Naive thymus-derived CD4-positive, alpha-beta T cell (primary cell): ENCODE measurements at regions of chr2 and their contacts with region 1.

Region 1: GRCh38 chr2:30336978-30337841 is 105.9 kb downstream of the LBH start:
- DNase-seq: peak; percentile 11 to 74 (median 69)
- ATAC-seq: peak; percentile 89
- H3K4me3 ChIP-seq: peak overlapping the region; percentile 46
- H3K4me3 Mint-ChIP-seq: peak overlapping the region; percentile 69 to 92 (median 85)
- H3K27ac ChIP-seq: peak overlapping the region; percentile 71
- H3K27ac Mint-ChIP-seq: peak overlapping the region; percentile 95 to 100 (median 98)
- H3K4me1 ChIP-seq: peaks cover 60 to 71% of the 10 kb centered on the region in 2 donors
- H3K4me1 Mint-ChIP-seq: peaks cover 57 to 87% (median 84%) of the 10 kb centered on the region in 7 donors
- H3K27me3 ChIP-seq: no peaks in the 10 kb centered on the region
- H3K27me3 Mint-ChIP-seq: no peaks in the 10 kb centered on the region

Region 2: DNA sequence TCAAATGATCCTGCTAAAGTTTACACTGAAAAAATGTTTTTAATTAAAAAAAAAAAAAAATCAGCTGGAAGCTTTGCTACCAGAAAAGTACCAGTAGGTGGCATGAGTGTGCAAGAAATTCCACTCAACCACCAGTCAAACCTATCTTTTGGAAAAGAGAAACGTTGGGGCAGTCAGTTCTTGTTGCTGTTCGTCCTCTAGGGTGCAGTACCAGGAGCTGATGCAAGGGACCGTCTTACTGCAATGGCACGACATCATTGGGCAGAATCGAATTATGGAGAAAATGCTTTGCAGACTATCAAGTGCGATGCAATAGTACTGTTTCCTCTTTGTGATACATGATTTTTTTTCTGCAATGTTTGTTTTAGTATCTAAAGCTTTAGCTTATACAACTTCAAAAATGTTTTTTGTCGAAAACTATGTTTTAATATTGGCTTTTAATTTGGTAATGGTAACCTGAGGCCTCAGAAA is 172.1 kb before region 1 on chr2:
- CTCF ChIA-PET with region 1: interaction called, 11 read pairs
- POLR2A ChIA-PET with region 1: interaction called, 8 read pairs
- intact Hi-C with region 1: loop called (anchors 1 to 5 kb)
- DNase-seq: peak in 8 of 9 donors; percentile 41 to 89 (median 84)
- ATAC-seq: peak; percentile 75
- H3K4me3 ChIP-seq: no peak overlapping the region
- H3K4me3 Mint-ChIP-seq: peak overlapping the region in 1 of 10 donors; percentile 37
- H3K27ac ChIP-seq: no peak overlapping the region
- H3K27ac Mint-ChIP-seq: peak overlapping the region in 4 of 9 donors; percentile 19 to 76 (median 50)
- H3K4me1 ChIP-seq: peaks cover 0 to 5% of the 10 kb centered on the region in 2 donors
- H3K4me1 Mint-ChIP-seq: peaks cover 3 to 12% (median 6%) of the 10 kb centered on the region in 7 donors
- H3K27me3 ChIP-seq: no peaks in the 10 kb centered on the region
- H3K27me3 Mint-ChIP-seq: no peaks in the 10 kb centered on the region

Region 3: GRCh38 chr2:30239308-30239985 is 97.8 kb before region 1 on chr2:
- CTCF ChIA-PET with region 1: interaction called, 32 read pairs
- POLR2A ChIA-PET with region 1: interaction called, 192 read pairs
- intact Hi-C with region 1: loop called in 1 of 2 experiments (anchors 1 kb)
- DNase-seq: peak; percentile 55 to 79 (median 74)
- ATAC-seq: peak; percentile 88
- H3K4me3 ChIP-seq: peak overlapping the region; percentile 45
- H3K4me3 Mint-ChIP-seq: peak overlapping the region; percentile 65 to 98 (median 92)
- H3K27ac ChIP-seq: peak overlapping the region; percentile 97
- H3K27ac Mint-ChIP-seq: peak overlapping the region; percentile 61 to 100 (median 90)
- H3K4me1 ChIP-seq: peaks cover 75 to 87% of the 10 kb centered on the region in 2 donors
- H3K4me1 Mint-ChIP-seq: peaks cover 68 to 97% (median 89%) of the 10 kb centered on the region in 7 donors
- H3K27me3 ChIP-seq: no peaks in the 10 kb centered on the region
- H3K27me3 Mint-ChIP-seq: no peaks in the 10 kb centered on the region

Region 4: GRCh38 chr2:30287857-30288513 is 49.2 kb before region 1 on chr2:
- CTCF ChIA-PET with region 1: interaction called, 5 read pairs
- POLR2A ChIA-PET with region 1: interaction called, 17 read pairs
- intact Hi-C with region 1: loop called in 1 of 2 experiments (anchors 2 kb)
- DNase-seq: peak in 5 of 9 donors; percentile 13 to 23 (median 14)
- ATAC-seq: no peak
- H3K4me3 ChIP-seq: no peak overlapping the region
- H3K4me3 Mint-ChIP-seq: peak overlapping the region in 9 of 10 donors; percentile 8 to 70 (median 50)
- H3K27ac ChIP-seq: no peak overlapping the region
- H3K27ac Mint-ChIP-seq: peak overlapping the region; percentile 14 to 66 (median 44)
- H3K4me1 ChIP-seq: peaks cover 0 to 21% of the 10 kb centered on the region in 2 donors
- H3K4me1 Mint-ChIP-seq: peaks cover 25 to 38% (median 30%) of the 10 kb centered on the region in 7 donors
- H3K27me3 ChIP-seq: no peaks in the 10 kb centered on the region
- H3K27me3 Mint-ChIP-seq: no peaks in the 10 kb centered on the region

Region 5: GRCh38 chr2:30366199-30366691 is 29.0 kb after region 1 on chr2:
- CTCF ChIA-PET with region 1: interaction called, 5 read pairs
- POLR2A ChIA-PET with region 1: interaction called, 8 read pairs
- intact Hi-C with region 1: loop called in 1 of 2 experiments (anchors 2 kb)
- DNase-seq: peak in 7 of 9 donors; percentile 14 to 44 (median 26)
- ATAC-seq: peak; percentile 40
- H3K4me3 ChIP-seq: no peak overlapping the region
- H3K4me3 Mint-ChIP-seq: peak overlapping the region in 9 of 10 donors; percentile 0 to 48 (median 13)
- H3K27ac ChIP-seq: no peak overlapping the region
- H3K27ac Mint-ChIP-seq: peak overlapping the region; percentile 0 to 87 (median 66)
- H3K4me1 ChIP-seq: peaks cover 7 to 29% of the 10 kb centered on the region in 2 donors
- H3K4me1 Mint-ChIP-seq: peaks cover 24 to 55% (median 45%) of the 10 kb centered on the region in 7 donors
- H3K27me3 ChIP-seq: no peaks in the 10 kb centered on the region
- H3K27me3 Mint-ChIP-seq: no peaks in the 10 kb centered on the region

Region 6: DNA sequence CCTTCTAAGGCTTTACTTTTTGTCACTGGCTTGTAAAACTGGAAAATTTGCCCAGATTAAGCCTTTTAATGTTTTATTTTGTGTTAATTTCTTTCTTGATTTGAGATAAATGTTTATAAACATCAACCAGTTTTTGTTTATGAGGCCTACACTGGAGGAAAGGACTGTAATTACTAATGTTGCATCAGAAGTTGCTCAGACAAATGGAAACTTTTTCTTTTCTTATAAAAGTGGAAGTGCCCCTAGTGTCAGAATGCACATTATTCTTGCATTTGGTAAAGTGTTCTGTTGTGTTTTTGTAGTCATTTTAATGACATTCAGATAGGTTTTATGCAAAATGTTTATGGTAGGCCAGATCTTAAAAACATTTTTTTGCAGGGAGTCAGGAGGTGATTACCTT is 135.1 kb after region 1 on chr2:
- CTCF ChIA-PET with region 1: interaction called, 51 read pairs
- POLR2A ChIA-PET with region 1: interaction called, 4 read pairs
- intact Hi-C with region 1: loop called in 1 of 2 experiments (anchors 1 kb)
- DNase-seq: peak in 1 of 9 donors; percentile 14
- ATAC-seq: no peak
- H3K4me3 ChIP-seq: no peak overlapping the region
- H3K4me3 Mint-ChIP-seq: no peak overlapping the region
- H3K27ac ChIP-seq: no peak overlapping the region
- H3K27ac Mint-ChIP-seq: peak overlapping the region in 2 of 9 donors; percentile 0 to 25
- H3K4me1 ChIP-seq: peaks cover 0 to 20% of the 10 kb centered on the region in 2 donors
- H3K4me1 Mint-ChIP-seq: peaks cover 14 to 78% (median 40%) of the 10 kb centered on the region in 7 donors
- H3K27me3 ChIP-seq: no peaks in the 10 kb centered on the region
- H3K27me3 Mint-ChIP-seq: no peaks in the 10 kb centered on the region

Region 7: GRCh38 chr2:31031132-31031706 is 694.0 kb after region 1 on chr2:
- CTCF ChIA-PET with region 1: no interaction called
- POLR2A ChIA-PET with region 1: no interaction called
- intact Hi-C with region 1: no loop called
- DNase-seq: no peak
- ATAC-seq: no peak
- H3K4me3 ChIP-seq: no peak overlapping the region
- H3K4me3 Mint-ChIP-seq: no peak overlapping the region
- H3K27ac ChIP-seq: no peak overlapping the region
- H3K27ac Mint-ChIP-seq: no peak overlapping the region
- H3K4me1 ChIP-seq: no peaks in the 10 kb centered on the region
- H3K4me1 Mint-ChIP-seq: peaks cover 0 to 5% (median 0%) of the 10 kb centered on the region in 7 donors
- H3K27me3 ChIP-seq: peaks cover 0 to 3% of the 10 kb centered on the region in 2 donors
- H3K27me3 Mint-ChIP-seq: peaks cover 0 to 21% (median 8%) of the 10 kb centered on the region in 5 donors